ENCODE measurements at regions of chr5 and their contacts with region 1.

Region 1: DNA sequence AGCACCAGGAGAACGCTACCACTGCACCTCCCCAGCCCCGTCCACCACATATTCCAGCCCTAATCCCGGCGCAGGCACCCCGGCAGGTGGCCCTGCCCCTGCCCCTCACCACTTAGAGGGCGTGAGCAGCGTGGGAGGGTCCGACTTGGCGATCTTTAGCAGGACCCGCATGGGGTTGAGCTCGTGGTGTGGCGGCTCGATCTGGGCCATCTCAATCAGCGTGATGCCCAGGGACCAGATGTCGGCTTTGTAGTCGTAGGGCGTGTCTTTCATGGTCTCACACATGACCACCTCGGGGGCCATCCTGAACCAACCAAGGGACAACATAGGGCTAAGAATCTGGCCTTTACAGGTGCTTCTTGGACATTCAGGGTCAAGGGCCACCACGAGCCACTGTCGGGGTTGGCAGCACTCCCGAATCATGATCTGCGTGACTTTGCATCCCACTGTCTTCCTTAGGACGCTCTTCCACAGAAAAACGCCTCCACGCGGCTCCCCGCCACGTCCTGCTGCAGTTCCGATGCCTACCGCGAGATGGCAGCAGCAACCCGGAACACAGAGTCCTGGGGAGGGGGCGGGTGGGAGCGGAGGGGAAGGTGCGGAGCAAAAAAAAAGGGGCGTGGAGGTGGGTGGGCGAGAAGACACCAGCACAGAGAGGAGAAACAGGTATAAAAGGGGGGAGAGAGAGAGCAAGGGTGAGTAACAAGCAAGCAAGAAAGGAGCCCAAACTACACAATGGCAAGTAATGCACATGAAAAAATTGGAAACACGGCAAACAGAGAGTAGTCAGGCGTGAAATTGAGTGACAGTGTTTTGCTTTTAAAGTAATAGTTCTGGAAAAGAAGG is 81.3 kb downstream of the STK10 start:
- DNase-seq: peak; percentile 91
- H3K4me3 Mint-ChIP-seq: no peak overlapping the region
- H3K27ac Mint-ChIP-seq: peak overlapping the region; percentile 75
- H3K4me1 Mint-ChIP-seq: peaks cover 51% of the 10 kb centered on the region
- H3K27me3 Mint-ChIP-seq: no peaks in the 10 kb centered on the region

Region 2: GRCh38 chr5:171667341-171668096 is 439.2 kb before region 1 on chr5:
- intact Hi-C with region 1: no loop called
- DNase-seq: no peak
- H3K4me3 Mint-ChIP-seq: no peak overlapping the region
- H3K27ac Mint-ChIP-seq: no peak overlapping the region
- H3K4me1 Mint-ChIP-seq: no peaks in the 10 kb centered on the region
- H3K27me3 Mint-ChIP-seq: no peaks in the 10 kb centered on the region

Region 3: DNA sequence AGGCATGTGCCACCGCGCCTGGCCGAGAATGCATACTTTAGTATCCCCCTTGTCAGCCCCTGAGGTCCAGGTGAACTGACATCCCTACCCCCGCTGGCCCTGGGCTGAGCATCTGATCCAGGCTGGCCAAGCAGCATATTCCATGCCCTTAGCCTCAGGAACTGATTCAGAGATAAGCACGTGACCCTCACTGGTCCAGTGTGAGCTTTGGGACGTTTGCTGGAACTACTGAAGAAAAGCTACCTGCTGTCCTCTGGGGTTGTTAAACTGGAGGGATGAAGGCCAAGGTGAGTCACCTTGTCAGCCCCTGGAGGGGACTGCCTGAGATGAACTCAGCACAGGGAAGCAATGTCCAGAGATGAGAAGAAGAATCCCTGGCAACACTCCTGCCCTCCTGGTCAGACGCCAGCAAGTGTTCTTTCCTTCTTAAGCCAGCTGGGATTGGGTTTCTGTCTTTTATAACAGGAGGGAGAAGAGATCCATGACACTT is 41.2 kb before region 1 on chr5:
- intact Hi-C with region 1: loop called (anchors 2 kb)
- DNase-seq: no peak
- H3K4me3 Mint-ChIP-seq: no peak overlapping the region
- H3K27ac Mint-ChIP-seq: no peak overlapping the region
- H3K4me1 Mint-ChIP-seq: peaks cover 42% of the 10 kb centered on the region
- H3K27me3 Mint-ChIP-seq: no peaks in the 10 kb centered on the region

Region 4: DNA sequence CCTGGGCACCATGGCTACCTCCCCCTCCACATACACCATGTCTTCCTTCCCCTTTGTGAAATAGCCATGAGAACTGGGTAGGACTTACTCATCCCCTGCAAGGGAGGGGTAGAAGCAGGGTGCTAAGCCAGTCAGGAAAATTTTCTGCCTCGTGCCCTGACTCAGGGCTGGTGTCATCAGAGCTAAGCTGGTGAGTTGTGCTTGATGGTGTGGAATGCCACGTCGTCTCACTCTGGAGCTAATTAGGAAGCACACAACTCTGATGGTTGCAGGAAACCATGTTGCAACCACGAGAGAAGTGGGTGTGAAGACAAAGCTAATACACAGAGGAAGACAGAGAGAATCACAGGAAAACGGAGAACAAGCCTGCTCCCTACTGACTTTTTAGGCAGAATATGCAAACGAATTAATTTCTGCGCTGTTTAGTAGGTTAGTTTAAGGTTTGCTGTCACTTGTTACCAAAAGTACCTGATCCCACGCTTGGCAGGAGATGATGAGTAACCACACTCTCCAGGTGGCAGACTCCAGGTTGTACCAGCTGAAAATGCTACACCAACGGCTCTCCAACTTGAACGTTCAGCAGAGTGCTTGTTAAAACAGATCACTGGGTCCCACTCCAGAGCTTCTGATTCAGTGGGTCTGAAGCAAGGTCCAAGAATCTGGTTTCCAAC is 26.8 kb after region 1 on chr5:
- intact Hi-C with region 1: loop called (anchors 2 kb)
- DNase-seq: no peak
- H3K4me3 Mint-ChIP-seq: peak overlapping the region; percentile 59
- H3K27ac Mint-ChIP-seq: peak overlapping the region; percentile 95
- H3K4me1 Mint-ChIP-seq: peaks cover 42% of the 10 kb centered on the region
- H3K27me3 Mint-ChIP-seq: no peaks in the 10 kb centered on the region

Region 5: GRCh38 chr5:172144291-172144815 is 37.6 kb after region 1 on chr5:
- intact Hi-C with region 1: no loop called
- DNase-seq: no peak
- H3K4me3 Mint-ChIP-seq: no peak overlapping the region
- H3K27ac Mint-ChIP-seq: no peak overlapping the region
- H3K4me1 Mint-ChIP-seq: peaks cover 33% of the 10 kb centered on the region
- H3K27me3 Mint-ChIP-seq: no peaks in the 10 kb centered on the region

Region 6: DNA sequence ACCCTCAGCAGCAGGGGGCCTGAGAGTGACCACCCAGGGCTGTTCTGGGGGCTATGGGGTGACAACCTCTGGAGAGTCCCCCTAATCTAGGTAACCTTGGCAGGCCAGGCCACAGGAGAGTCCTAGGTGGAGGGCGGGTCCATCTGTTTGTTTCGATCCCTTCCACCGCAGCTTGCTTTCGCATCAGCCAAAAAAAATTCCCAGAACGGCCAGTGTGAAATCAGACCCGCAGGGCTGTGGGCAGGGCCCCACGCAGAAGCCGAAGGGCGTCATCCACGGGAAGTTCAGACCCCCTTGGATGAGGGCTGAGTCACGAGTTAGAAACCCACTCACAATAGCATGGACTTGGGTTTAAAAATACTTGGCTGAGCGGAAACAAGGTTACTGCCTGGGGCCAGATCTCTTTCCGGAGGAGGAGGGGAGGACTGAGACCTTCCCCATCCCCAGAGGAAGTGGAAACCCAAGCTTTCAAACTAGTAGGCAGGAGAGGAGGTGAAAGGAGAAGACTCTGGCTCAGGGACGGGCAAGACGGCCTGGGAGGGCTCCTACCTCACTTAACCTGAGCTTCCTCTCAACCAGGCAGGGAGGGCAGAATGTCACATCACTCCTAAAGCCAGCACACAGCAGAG is 72.7 kb after region 1 on chr5:
- intact Hi-C with region 1: loop called (anchors 1 kb)
- DNase-seq: peak; percentile 88
- H3K4me3 Mint-ChIP-seq: peak overlapping the region; percentile 90
- H3K27ac Mint-ChIP-seq: peak overlapping the region; percentile 96
- H3K4me1 Mint-ChIP-seq: peaks cover 78% of the 10 kb centered on the region
- H3K27me3 Mint-ChIP-seq: no peaks in the 10 kb centered on the region

Region 7: GRCh38 chr5:172223901-172224873 is 117.5 kb after region 1 on chr5:
- intact Hi-C with region 1: loop called (anchors 1 kb)
- DNase-seq: peak; percentile 69
- H3K4me3 Mint-ChIP-seq: peak overlapping the region; percentile 17
- H3K27ac Mint-ChIP-seq: peak overlapping the region; percentile 73
- H3K4me1 Mint-ChIP-seq: peaks cover 22% of the 10 kb centered on the region
- H3K27me3 Mint-ChIP-seq: peaks cover 7% of the 10 kb centered on the region

Region 8: DNA sequence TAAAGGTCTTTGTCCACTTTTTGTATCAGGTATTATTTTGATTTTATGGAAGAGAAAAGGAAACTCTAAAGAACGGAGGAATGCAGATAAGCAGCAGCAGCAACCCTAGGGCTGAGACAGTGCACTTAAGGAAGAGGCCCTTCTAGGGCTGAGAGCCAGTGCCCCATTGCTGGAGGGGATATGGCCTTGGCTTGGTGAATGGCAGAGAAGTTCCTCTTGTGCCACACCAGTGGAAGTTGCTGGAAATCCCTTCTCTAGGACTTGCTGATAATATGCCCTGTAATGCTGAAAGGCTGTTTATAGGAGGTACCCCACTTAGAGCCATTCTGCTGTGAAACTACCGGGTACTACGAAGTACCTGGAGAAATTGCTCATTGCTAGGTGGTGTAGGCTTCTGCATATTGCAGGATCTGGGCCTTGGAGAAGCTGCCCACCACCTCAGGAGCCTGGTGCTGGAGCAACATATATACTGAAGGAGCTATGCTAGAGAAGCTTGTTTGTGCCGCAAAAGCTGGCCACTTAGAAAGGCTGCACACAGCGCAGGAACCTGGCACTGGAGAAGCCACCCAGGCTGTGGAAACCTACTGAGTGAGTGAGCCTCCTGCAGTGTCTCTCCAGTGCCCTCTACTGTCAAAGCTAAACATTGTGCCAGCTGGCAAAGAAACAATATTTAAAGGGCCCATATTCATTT is 186.5 kb after region 1 on chr5:
- intact Hi-C with region 1: loop called (anchors 1 kb)
- DNase-seq: peak; percentile 89
- H3K4me3 Mint-ChIP-seq: no peak overlapping the region
- H3K27ac Mint-ChIP-seq: no peak overlapping the region
- H3K4me1 Mint-ChIP-seq: peaks cover 3% of the 10 kb centered on the region
- H3K27me3 Mint-ChIP-seq: peaks cover 10% of the 10 kb centered on the region

Region 9: GRCh38 chr5:172412724-172413286 is 306.1 kb after region 1 on chr5:
- intact Hi-C with region 1: loop called (anchors 5 kb)
- DNase-seq: peak; percentile 65
- H3K4me3 Mint-ChIP-seq: peak overlapping the region; percentile 63
- H3K27ac Mint-ChIP-seq: peak overlapping the region; percentile 80
- H3K4me1 Mint-ChIP-seq: peaks cover 29% of the 10 kb centered on the region
- H3K27me3 Mint-ChIP-seq: peaks cover 8% of the 10 kb centered on the region